Activated CD4-positive, alpha-beta T cell treated with anti-CD3 and anti-CD28 coated beads, Interleukin-2, amount 10 ng/mL, durations not matched to agents 24 days and 14 days (primary cell): ENCODE measurements at regions of chr19 and their contacts with region 1.

Region 1: GRCh38 chr19:16185123-16185767 is at the start of gene FAM32A:
- DNase-seq: peak; percentile 100
- H3K4me3 Mint-ChIP-seq: peak within 1 kb of the TSS; percentile 100
- H3K27ac Mint-ChIP-seq: peak within 1 kb of the TSS; percentile 95
- H3K4me1 Mint-ChIP-seq: peaks cover 27% of the 10 kb centered on the region
- H3K27me3 Mint-ChIP-seq: peaks cover 2% of the 10 kb centered on the region
- total RNA-seq, gene FAM32A: 59.2 and 65.2 TPM in 2 replicates

Region 2: GRCh38 chr19:15629003-15629880 is 556.0 kb before region 1 on chr19:
- intact Hi-C with region 1: loop called (anchors 1 kb)
- DNase-seq: peak; percentile 96
- H3K4me3 Mint-ChIP-seq: no peak overlapping the region
- H3K27ac Mint-ChIP-seq: no peak overlapping the region
- H3K4me1 Mint-ChIP-seq: no peaks in the 10 kb centered on the region
- H3K27me3 Mint-ChIP-seq: peaks cover 10% of the 10 kb centered on the region

Region 3: DNA sequence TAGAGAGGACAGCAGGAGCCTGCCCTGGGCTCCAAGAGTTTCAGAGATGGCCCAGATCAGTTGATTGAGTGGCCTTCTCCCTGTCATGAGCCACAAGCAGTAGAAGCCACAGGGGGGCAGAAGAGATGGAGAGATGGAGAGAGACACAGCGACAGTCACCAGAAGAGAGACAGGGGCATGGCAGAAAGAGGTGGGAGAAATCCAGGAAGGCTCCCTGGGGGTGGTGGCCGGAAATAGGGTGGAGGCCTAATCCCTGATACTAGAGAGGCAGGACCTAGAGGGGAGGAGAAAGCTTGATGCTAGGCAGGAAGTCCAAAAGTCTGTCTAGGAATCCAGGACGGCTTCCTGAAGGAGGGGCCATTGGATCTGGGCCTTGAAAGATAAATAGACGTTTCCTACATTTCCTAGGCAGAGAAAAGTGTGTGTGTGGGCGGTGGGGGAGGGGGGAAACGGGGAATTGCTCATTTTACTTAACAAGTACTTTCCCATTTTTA is 118.6 kb before region 1 on chr19:
- intact Hi-C with region 1: loop called (anchors 1 kb)
- DNase-seq: peak; percentile 83
- H3K4me3 Mint-ChIP-seq: no peak overlapping the region
- H3K27ac Mint-ChIP-seq: peak overlapping the region; percentile 76
- H3K4me1 Mint-ChIP-seq: peaks cover 26% of the 10 kb centered on the region
- H3K27me3 Mint-ChIP-seq: no peaks in the 10 kb centered on the region

Region 4: GRCh38 chr19:16118489-16119033 is 66.7 kb before region 1 on chr19:
- intact Hi-C with region 1: loop called (anchors 1 kb)
- DNase-seq: peak; percentile 82
- H3K4me3 Mint-ChIP-seq: peak overlapping the region; percentile 73
- H3K27ac Mint-ChIP-seq: peak overlapping the region; percentile 94
- H3K4me1 Mint-ChIP-seq: peaks cover 46% of the 10 kb centered on the region
- H3K27me3 Mint-ChIP-seq: no peaks in the 10 kb centered on the region

Region 5: GRCh38 chr19:16160943-16161560 is 24.2 kb before region 1 on chr19:
- intact Hi-C with region 1: loop called (anchors 2 kb)
- DNase-seq: peak; percentile 68
- H3K4me3 Mint-ChIP-seq: peak overlapping the region; percentile 68
- H3K27ac Mint-ChIP-seq: peak overlapping the region; percentile 86
- H3K4me1 Mint-ChIP-seq: peaks cover 17% of the 10 kb centered on the region
- H3K27me3 Mint-ChIP-seq: no peaks in the 10 kb centered on the region

Region 6: DNA sequence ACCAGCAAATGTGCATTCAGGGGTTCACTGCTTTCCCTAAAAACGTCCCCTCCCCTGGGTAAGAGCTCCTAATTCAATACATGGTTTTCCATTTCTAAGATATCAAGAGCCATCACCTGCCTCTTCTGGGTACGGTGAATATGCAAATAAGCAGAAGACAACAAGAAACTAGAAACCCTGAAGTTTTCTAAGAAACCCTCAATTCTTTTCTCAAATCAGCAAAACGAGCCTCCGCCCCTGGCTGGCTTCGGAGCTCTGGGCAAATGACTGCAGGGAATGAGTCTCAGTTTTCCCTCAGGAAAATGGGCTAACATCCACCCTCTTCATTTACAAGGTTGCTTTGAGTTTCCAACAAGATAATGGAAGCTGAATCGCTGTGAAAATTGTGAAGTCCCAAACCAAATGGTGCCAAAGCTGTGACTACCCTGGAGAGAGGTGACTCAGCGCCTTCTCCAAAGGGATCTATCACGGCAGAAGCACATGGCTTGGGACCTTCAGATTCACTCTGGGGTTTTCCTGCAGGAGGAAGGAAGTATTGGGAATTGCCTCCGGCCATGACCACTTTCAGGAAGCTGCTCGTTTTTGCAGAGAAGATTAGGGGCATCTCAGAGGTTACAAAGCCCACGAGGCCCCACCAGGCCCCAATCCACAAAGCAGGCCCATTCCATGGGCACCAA is 166.0 kb after region 1 on chr19:
- intact Hi-C with region 1: no loop called
- DNase-seq: peak; percentile 70
- H3K4me3 Mint-ChIP-seq: peak overlapping the region; percentile 68
- H3K27ac Mint-ChIP-seq: peak overlapping the region; percentile 28
- H3K4me1 Mint-ChIP-seq: peaks cover 36% of the 10 kb centered on the region
- H3K27me3 Mint-ChIP-seq: peaks cover 14% of the 10 kb centered on the region